BJ (cell line): ENCODE measurements at regions of chr12 and their contacts with region 1.

Region 1: GRCh38 chr12:108803428-108804105 is 53.8 kb downstream of the SSH1 start:
- DNase-seq: peak; percentile 73
- H3K4me3 ChIP-seq: no peak overlapping the region
- H3K27me3 ChIP-seq: no peaks in the 10 kb centered on the region
- CTCF ChIP-seq: peak; percentile 91

Region 2: DNA sequence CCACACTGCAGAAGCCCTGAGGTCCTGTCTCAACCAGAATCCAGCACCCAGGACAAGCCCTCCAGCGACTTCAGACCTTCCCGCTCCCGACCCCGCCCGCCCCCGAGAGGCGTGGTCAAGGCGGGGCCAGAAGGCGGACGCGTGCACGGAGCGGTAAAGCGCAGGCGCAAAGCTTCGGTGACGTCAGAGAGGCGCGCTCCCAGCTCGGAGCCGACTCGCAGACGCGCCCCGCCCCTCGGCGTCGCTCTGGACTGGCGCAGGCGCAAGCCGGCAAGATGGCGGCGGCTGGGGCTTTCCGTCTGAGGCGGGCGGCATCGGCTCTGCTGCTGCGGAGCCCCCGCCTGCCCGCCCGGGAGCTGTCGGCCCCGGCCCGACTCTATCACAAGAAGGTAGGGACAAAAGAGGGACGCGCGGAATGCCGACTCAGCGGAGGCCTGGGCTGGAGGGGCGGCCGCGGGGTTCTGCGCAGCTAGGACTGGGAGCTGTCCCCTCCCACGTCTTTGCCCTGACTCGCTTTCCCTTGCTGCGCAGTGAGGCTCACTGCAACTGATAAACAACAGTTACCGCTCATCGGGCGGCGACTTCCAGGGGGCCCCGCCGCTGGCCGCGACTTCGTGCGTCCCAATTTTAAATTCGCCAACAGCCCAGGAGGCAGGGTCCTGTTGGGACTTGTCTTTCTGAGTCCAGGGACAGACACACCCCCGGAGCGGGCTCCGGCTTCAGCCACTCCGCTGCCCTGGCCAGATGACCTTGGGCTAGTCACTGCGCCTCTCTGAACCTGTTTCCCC is 241.0 kb before region 1 on chr12 and contains the start of gene ISCU:
- CTCF ChIA-PET with region 1: interaction called, 13 read pairs
- POLR2A ChIA-PET with region 1: no interaction called
- DNase-seq: peak; percentile 70
- H3K4me3 ChIP-seq: peak within 1 kb of the TSS; percentile 94
- H3K27me3 ChIP-seq: no peaks in the 10 kb centered on the region
- CTCF ChIP-seq: no peak
- polyA plus RNA-seq, gene ISCU: 125 and 169 TPM in 2 replicates

Region 3: DNA sequence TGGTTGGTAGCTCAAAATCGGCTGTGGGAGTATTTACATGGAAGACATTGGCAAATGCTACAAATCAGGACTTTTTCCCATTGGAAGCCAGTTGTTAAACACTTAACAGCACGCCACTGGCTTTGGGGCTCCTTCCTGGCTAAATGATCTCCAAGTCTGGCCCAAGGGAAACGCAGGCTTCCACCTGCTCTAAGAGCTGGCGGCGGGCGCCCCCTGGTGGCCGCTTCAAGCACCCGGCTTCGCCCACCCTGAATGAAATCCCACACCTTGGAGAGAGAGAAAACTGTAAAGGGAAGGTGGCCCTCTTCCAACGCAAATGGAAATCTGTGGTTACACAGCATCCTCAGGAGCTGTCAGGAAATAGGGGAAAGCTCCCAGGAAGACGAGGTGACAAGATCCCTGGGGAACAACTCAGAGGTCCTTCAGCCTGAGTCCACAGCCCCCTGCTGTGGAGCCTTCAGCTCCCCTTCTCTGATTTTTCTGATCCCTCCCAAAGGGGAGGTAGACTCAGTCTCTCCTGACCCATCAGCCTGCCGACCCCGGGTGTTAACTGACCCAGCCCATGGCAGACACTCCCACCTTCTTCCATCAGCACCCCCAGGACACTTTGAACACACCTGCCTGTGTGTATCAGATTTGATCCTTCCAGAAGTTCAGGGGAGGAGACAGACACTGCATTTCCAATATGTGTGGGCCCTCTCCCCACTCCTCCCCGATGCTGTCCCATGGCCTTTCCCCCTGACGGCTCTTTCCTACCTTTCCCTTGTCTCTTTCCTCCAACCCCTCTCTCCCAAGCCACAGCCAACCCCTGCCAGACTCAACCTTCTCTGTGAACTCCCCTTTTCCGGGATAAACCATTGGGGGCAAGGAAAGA is 185.3 kb before region 1 on chr12:
- CTCF ChIA-PET with region 1: interaction called, 29 read pairs
- POLR2A ChIA-PET with region 1: no interaction called
- DNase-seq: no peak
- H3K4me3 ChIP-seq: no peak overlapping the region
- H3K27me3 ChIP-seq: no peaks in the 10 kb centered on the region
- CTCF ChIP-seq: peak; percentile 97

Region 4: DNA sequence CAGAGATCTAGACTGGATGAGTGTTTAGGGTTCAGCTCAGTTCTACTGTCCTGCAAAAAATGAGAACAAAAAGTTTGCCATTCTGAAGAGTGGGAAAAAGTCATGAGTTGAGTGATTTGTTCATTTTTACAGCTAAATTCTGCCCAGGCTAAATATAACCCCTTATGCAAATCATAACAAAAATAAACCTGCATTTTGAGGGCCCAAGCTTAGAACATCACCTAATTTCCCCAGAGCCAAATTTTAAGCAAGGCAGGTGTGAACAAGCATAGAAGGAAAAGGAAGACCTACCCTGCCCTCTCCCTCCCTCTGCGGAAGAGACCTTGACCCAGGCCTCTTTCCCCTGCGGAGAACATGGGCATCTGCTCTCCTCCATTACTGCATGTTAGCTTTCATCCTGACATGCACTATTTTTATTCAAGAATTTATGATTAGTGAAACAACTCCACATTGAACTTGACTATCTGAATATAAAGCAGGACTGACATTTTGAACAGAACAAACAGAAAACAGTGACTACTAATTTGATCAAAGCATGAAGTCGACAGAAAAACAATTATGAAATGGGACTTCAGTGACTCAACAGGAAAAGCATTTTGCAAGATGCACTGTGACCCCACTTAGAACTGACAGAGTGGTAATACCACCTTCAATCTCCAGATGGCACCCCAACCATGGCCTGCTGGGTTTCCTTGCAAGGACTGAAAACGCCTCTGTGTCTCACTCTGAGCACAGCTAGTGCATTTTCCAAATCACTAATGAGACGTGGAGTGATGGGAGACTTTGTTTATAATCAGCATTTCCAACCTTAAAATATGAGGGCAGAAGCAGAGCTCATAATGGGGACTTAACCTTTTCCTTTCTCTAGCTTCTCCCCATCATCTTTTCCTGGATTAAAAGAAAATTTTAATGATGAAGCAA is 139.0 kb before region 1 on chr12:
- CTCF ChIA-PET with region 1: interaction called, 108 read pairs
- POLR2A ChIA-PET with region 1: interaction called, 3 read pairs
- DNase-seq: peak; percentile 89
- H3K4me3 ChIP-seq: no peak overlapping the region
- H3K27me3 ChIP-seq: no peaks in the 10 kb centered on the region
- CTCF ChIP-seq: peak; percentile 92

Region 5: DNA sequence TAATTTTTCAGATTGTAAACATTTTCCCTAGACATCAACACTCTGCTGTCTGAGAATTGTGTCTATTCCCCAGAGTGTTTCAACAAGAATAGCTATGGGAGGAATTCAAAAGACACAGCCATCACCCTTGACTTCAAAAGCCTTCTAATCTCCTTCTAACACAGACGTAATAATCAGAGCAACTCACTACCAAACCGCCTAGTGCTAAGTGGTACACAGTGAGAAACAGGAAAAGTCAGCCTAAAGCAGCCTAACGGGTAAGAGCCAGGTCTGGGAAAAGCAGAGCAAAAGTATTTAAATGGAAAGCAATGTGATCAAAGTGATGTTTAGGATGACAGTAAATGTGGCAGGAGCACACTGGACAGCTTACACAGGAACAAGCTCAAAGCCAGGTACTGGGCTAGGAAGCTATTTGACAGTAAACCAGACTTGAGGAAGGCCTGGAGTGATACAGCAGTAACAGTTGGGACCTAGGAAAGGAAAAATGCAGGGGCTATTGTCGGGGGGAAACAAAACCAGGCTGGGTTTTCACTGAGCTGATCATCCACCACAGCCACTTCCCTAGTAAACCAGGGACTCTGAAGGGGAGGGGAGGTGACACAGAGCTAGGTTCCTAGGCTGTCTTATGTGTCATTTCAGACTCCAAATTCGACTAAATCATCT is 101.7 kb before region 1 on chr12:
- CTCF ChIA-PET with region 1: no interaction called
- POLR2A ChIA-PET with region 1: no interaction called
- DNase-seq: no peak
- H3K4me3 ChIP-seq: no peak overlapping the region
- H3K27me3 ChIP-seq: no peaks in the 10 kb centered on the region
- CTCF ChIP-seq: no peak

Region 6: DNA sequence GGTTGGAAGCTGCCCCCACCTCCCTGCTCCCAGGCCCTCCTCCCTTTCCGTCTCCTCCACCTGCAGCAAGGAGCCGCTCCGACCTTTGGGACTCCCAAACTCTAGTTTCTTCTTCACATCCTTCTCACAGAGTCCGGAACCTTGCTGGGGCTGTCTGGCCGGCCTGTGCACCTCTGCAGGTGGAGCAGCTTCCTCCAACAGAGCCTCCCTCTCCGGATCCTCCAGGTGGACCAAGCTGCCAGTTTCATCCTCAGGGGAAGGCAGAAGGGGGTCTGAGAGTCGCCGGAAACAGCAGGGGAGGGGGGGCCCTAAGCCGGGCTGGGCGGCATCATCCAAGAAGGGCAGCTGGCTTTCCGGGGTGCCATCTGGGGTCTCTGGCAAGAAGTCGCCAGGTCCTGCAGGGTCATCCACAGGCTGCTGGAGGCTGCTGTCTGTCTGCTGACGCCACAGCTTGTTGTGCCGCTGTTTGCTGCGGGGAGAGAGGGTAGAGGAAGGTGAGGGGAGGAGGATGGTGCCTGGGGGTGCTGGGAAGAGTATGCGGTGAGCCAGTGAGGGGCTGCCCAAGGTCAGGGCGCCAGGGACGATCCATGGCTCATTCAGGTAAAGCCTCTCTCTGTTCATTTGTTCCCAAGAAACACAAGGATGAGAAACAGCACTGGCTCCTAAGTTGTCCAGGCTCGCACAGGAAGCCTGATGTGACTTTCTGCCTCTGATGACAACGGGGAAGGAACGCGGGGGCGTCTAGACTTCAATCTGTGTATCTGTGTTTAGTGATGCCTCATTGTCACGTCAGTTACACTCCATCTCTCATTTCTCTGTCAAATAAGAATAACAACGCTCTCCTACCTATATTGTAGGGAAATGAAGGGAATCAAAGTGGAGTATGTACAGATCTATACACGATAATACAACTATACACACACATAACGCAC is 10.9 kb before region 1 on chr12:
- CTCF ChIA-PET with region 1: no interaction called
- POLR2A ChIA-PET with region 1: no interaction called
- DNase-seq: no peak
- H3K4me3 ChIP-seq: no peak overlapping the region
- H3K27me3 ChIP-seq: no peaks in the 10 kb centered on the region
- CTCF ChIP-seq: no peak

Region 7: GRCh38 chr12:108833355-108833733 is 29.8 kb after region 1 on chr12:
- CTCF ChIA-PET with region 1: interaction called, 20 read pairs
- POLR2A ChIA-PET with region 1: no interaction called
- DNase-seq: peak; percentile 86
- H3K4me3 ChIP-seq: 0 out of 2 replicates have a peak overlapping the region, but pooled peaks have one; percentile 3
- H3K27me3 ChIP-seq: no peaks in the 10 kb centered on the region
- CTCF ChIP-seq: no peak

Region 8: DNA sequence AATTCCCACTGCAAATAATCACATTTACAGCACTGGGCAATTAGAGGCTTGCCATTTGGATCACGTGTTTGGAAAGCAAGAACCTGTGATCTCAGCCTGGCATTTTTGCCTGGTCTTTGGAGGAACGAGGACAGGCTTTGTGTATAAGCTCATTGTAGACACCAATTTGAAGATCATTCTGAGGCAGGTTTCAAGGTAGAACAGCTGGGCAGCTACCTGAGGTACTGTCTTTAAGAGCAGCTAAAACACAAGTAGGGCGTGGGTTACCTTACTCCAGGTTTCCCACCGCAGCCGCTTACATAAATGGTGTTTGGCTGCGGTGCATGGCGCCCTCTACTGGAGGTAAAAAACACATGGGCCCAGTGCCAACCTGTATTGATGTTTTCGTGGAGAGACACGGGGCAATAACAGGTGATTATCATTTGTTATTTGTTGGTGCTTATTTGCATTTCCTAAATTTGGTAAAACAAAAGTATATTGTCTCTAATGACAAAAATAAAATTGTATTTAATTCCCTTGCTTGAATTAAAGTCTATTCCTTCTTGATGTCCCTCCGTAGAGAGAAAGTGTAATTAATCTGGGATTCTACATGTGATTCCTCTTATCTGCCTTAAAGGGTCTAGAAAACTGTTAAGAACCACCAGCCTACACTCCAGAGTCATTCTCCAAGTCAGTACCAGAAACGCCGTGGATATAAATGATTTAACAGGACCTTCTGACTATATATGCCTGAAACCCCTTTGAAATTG is 147.6 kb after region 1 on chr12:
- CTCF ChIA-PET with region 1: interaction called, 30 read pairs
- POLR2A ChIA-PET with region 1: no interaction called
- DNase-seq: peak; percentile 4
- H3K4me3 ChIP-seq: no peak overlapping the region
- H3K27me3 ChIP-seq: no peaks in the 10 kb centered on the region; the same call in 1 of the 2 replicates
- CTCF ChIP-seq: peak; percentile 84